Testis (tissue), 5 donors: ENCODE measurements at regions of chrX and their contacts with region 1.

Region 1: GRCh38 chrX:100636321-100636991 is at the start of gene TSPAN6:
- DNase-seq: peak; percentile 86
- H3K4me3 ChIP-seq: peak within 1 kb of the TSS; percentile 60 to 61
- H3K27ac ChIP-seq: peak within 1 kb of the TSS; percentile 69 to 75
- H3K4me1 ChIP-seq: no peaks in the 10 kb centered on the region
- H3K27me3 ChIP-seq: no peaks in the 10 kb centered on the region
- CTCF ChIP-seq: peak in 2 of 3 experiments; percentile 34 to 47
- POLR2A ChIP-seq: no peak
- total RNA-seq, gene TSPAN6: 47.3 to 133 TPM

Region 2: DNA sequence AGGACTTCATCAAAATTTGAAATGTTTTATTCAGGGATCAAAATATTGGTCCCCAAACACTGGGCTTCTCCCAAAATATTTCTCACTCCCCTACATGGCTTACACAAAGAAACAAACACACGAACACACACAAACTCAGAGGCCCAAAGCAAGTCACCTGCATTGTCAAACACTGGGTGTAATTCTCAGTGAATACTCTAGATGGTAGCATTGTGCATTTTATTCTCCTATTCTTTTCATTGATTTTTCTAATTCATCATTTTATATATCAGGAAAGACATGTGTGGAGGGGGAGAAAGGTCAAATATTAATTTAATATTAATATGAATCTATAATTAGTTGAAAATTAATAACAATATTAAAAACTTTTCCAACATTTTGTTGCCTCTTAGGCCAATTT is 124.0 kb before region 1 on chrX:
- intact Hi-C with region 1: loop called (anchors 10 kb)
- DNase-seq: no peak
- H3K4me3 ChIP-seq: no peak overlapping the region
- H3K27ac ChIP-seq: no peak overlapping the region
- H3K4me1 ChIP-seq: no peaks in the 10 kb centered on the region
- H3K27me3 ChIP-seq: no peaks in the 10 kb centered on the region
- CTCF ChIP-seq: peak; percentile 22 to 47 (median 46)
- POLR2A ChIP-seq: no peak